PC-9 (cell line): ENCODE measurements at regions of chr10 and their contacts with region 1.

Region 1: GRCh38 chr10:69408318-69409175 is 8.2 kb downstream of the TACR2 start:
- DNase-seq: peak; percentile 85 to 96
- H3K4me3 ChIP-seq: peak overlapping the region; percentile 50; the same call in 1 of the 2 replicates
- H3K27ac ChIP-seq: no peak overlapping the region
- H3K4me1 ChIP-seq: peaks cover 26% of the 10 kb centered on the region
- H3K27me3 ChIP-seq: no peaks in the 10 kb centered on the region
- CTCF ChIP-seq: peak; percentile 54

Region 2: GRCh38 chr10:68800196-68800595 is 608.4 kb before region 1 on chr10:
- CTCF ChIA-PET with region 1: no interaction called
- POLR2A ChIA-PET with region 1: no interaction called
- intact Hi-C with region 1: loop called (anchors 10 kb)
- DNase-seq: no peak
- H3K4me3 ChIP-seq: no peak overlapping the region
- H3K27ac ChIP-seq: no peak overlapping the region
- H3K4me1 ChIP-seq: 0 out of 2 replicates have a peak, but pooled peaks cover 4% of the 10 kb centered on the region
- H3K27me3 ChIP-seq: no peaks in the 10 kb centered on the region
- CTCF ChIP-seq: no peak

Region 3: DNA sequence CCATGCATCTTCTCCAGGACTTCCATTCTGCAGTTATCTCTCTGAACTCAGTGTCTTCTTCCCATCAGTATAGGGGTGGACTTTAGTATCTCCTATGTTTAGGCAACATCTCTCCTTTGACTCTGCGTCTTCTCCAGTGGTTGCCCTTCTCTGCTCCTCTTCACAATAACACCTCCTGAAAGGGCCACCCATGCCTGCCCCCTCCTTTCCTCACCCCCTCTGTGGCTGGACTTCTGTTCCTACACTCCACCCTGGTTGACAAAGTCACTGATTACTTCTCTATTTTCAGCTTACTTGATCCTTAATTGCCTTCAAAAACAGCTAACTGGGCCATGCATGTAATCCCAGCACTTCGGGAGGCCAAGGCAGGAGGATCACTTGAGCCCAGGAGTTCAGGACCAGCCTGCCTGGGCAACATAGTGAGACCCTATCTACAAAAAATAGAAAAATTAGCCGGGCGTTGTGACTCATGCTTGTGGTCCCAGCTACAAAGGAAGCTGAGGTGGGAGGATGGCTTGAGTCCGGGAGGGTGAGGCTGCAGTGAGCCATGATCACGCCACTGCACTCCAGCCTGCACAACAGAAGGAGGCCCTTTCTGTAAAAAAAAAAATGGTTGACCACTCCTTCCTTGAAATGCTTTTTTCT is 307.0 kb before region 1 on chr10:
- CTCF ChIA-PET with region 1: no interaction called
- POLR2A ChIA-PET with region 1: no interaction called
- intact Hi-C with region 1: loop called (anchors 5 kb)
- DNase-seq: no peak
- H3K4me3 ChIP-seq: no peak overlapping the region
- H3K27ac ChIP-seq: no peak overlapping the region
- H3K4me1 ChIP-seq: no peaks in the 10 kb centered on the region
- H3K27me3 ChIP-seq: no peaks in the 10 kb centered on the region
- CTCF ChIP-seq: no peak

Region 4: DNA sequence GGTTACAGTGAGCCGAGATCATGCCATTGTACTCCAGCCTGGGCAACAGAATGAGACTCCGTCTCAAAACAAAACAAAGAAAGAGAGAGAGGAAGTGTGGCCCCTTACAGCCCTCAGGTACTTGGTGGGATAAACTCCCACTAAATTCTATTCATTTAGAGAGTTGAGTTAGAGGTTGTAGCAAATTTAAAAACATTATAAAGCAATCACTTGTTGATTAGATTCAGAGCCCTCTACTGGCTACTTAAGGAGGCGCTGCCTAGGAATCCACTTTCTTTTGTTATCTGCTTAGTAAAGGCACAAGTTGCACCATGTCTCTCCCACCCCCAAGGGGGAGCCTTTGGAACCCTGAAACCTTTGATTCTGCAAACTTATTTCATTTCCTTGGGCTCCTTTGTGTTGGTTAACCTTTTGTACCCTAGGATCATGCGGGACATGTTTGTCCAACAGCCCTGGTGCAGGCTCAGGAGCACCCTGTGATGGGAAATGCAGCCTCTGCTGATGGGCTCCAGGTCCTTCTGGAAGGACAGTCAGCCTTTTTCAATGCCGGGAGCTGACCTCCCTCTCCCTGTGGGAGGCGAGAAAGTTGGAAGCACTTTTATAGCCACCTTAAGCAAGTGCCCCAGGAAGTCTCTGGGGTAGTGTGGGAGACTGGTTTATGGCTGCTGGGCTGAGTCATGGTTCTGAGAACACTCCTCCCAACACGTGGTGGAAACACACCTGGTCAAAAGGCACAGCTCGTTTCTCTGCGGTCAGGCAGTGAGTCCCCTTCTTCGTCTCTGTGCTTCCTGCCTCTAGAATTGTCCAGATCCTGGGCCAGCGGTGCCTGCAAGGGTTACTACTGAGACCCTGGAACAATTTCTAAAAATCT is 186.2 kb before region 1 on chr10:
- CTCF ChIA-PET with region 1: interaction called, 11 read pairs
- POLR2A ChIA-PET with region 1: no interaction called
- intact Hi-C with region 1: no loop called
- DNase-seq: peak; percentile 81 to 96
- H3K4me3 ChIP-seq: peak overlapping the region; percentile 35; the same call in 1 of the 2 replicates
- H3K27ac ChIP-seq: peak overlapping the region; percentile 98
- H3K4me1 ChIP-seq: peaks cover 73% of the 10 kb centered on the region
- H3K27me3 ChIP-seq: no peaks in the 10 kb centered on the region
- CTCF ChIP-seq: peak; percentile 87

Region 5: GRCh38 chr10:69451209-69451783 is 42.7 kb after region 1 on chr10 and contains the start of gene TSPAN15:
- CTCF ChIA-PET with region 1: interaction called, 3 read pairs
- POLR2A ChIA-PET with region 1: interaction called, 6 read pairs
- intact Hi-C with region 1: loop called (anchors 1 kb)
- DNase-seq: peak; percentile 88 to 97
- H3K4me3 ChIP-seq: peak within 1 kb of the TSS; percentile 81
- H3K27ac ChIP-seq: peak within 1 kb of the TSS; percentile 95
- H3K4me1 ChIP-seq: peaks cover 87% of the 10 kb centered on the region
- H3K27me3 ChIP-seq: no peaks in the 10 kb centered on the region
- CTCF ChIP-seq: no peak
- total RNA-seq, gene TSPAN15: 97.0 and 108 TPM in 2 replicates

Region 6: GRCh38 chr10:69629897-69630650 is 221.5 kb after region 1 on chr10 and contains the start of gene FAM241B:
- CTCF ChIA-PET with region 1: interaction called, 12 read pairs
- POLR2A ChIA-PET with region 1: no interaction called
- intact Hi-C with region 1: no loop called
- DNase-seq: peak; percentile 64 to 86
- H3K4me3 ChIP-seq: peak within 1 kb of the TSS; percentile 81
- H3K27ac ChIP-seq: no peak within 1 kb of the TSS
- H3K4me1 ChIP-seq: peaks cover 8% of the 10 kb centered on the region; the same call in 1 of the 2 replicates
- H3K27me3 ChIP-seq: peaks cover 3% of the 10 kb centered on the region; the same call in 1 of the 2 replicates
- CTCF ChIP-seq: peak; percentile 100
- total RNA-seq, gene FAM241B: 10.7 and 13.0 TPM in 2 replicates

Region 7: DNA sequence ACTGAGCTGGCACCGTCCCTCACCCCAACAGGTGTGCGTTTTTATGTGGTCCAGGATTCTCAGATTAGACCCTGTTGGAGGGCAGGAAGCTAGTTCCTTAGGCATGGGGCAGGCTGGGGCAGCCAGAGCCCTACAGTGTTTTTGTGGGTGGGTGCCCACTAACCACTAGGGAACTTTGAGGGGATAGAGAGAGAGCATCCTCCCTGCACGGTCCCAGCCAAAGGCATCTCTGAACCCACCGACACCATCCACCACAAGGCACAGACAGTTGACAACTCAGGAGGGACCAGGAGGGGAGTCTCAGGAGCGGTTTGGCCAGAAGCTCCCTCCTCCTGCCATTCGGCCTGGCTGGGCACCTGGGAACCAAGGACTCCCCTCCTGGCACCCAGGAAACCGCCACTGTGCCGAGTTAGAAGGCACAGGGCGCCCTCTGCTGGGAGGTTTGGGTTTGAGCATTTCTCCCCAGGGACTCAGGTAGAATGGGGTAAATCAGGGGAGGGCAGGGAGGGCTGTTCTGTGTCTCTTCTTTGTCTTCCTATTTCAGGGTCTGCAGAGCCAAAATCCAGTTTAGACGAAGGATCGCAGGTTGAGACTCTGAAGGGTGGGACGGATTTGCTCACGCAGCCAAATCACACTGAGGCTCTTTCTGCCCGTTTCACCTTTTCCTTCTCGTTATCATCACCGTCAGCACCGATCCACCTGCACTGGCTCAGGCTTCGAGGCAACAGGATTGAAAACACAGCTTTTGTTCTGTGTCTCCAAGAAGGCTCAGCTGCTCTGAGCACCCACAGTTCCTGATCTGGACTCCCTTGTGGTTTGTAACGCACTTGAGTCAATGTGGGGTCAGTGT is 308.4 kb after region 1 on chr10:
- CTCF ChIA-PET with region 1: interaction called, 4 read pairs
- POLR2A ChIA-PET with region 1: no interaction called
- intact Hi-C with region 1: loop called (anchors 10 kb)
- DNase-seq: peak in 1 of 2 experiments; percentile 66
- H3K4me3 ChIP-seq: no peak overlapping the region
- H3K27ac ChIP-seq: no peak overlapping the region
- H3K4me1 ChIP-seq: no peaks in the 10 kb centered on the region
- H3K27me3 ChIP-seq: peaks cover 63% of the 10 kb centered on the region
- CTCF ChIP-seq: peak; percentile 93

Region 8: GRCh38 chr10:70513848-70514309 is 1105.3 kb after region 1 on chr10:
- CTCF ChIA-PET with region 1: no interaction called
- POLR2A ChIA-PET with region 1: no interaction called
- intact Hi-C with region 1: no loop called
- DNase-seq: no peak
- H3K4me3 ChIP-seq: no peak overlapping the region
- H3K27ac ChIP-seq: no peak overlapping the region
- H3K4me1 ChIP-seq: peaks cover 8% of the 10 kb centered on the region
- H3K27me3 ChIP-seq: no peaks in the 10 kb centered on the region
- CTCF ChIP-seq: no peak